ENCODE measurements at regions of chrX and their contacts with region 1.

Region 1: DNA sequence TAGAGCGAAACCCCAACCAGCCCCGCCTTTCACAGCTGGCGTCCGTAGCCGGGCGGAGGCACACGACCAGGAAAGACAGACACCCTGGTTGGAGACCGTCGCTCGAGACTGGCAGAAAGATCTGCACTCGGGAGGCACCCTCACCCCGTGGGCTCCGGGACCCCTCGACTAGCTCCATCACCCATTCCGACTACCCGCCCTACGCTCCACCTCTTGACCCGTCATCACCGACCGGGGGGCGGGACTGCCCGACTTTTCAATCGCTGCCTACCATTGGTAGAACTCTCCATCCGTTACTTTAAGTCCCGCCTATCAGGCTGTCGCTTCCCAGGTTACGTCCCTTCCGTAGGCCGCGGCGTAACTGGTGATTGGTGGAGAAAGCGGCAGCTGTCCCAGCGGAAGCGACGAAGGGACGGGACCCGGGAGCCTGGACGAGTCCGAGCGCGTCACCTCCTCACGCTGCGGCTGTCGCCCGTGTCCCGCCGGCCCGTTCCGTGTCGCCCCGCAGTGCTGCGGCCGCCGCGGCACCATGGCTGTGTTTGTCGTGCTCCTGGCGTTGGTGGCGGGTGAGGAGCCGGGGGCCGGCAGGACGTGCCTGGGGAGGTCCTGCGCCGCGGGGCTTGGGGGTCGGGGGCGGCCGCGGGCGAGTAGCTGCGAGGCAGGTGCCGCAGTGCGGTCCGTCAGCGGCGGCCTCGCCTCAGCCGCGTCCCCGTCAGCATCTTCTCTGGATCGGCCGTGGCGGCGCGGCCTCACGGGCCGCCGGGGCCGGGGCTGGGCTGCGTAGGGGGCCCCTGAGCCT is at the start of gene ATP6AP2:
- DNase-seq: peak; percentile 75 to 95 (median 84)
- ATAC-seq: peak; percentile 94
- H3K4me3 ChIP-seq: peak within 1 kb of the TSS; percentile 83
- H3K4me3 Mint-ChIP-seq: peak within 1 kb of the TSS; percentile 94
- H3K27ac ChIP-seq: peak within 1 kb of the TSS; percentile 79 to 89
- H3K27ac Mint-ChIP-seq: peak within 1 kb of the TSS; percentile 89
- H3K4me1 ChIP-seq: peaks cover 17% of the 10 kb centered on the region
- H3K4me1 Mint-ChIP-seq: peaks cover 32% of the 10 kb centered on the region
- H3K27me3 ChIP-seq: no peaks in the 10 kb centered on the region
- H3K27me3 Mint-ChIP-seq: no peaks in the 10 kb centered on the region
- CTCF ChIP-seq: no peak
- total RNA-seq, gene ATP6AP2: 73.8 to 78.7 TPM

Region 2: GRCh38 chrX:40539214-40540142 is 41.3 kb before region 1 on chrX:
- CTCF ChIA-PET with region 1: no interaction called
- POLR2A ChIA-PET with region 1: interaction called, 6 read pairs
- intact Hi-C with region 1: loop called in 1 of 2 experiments (anchors 5 kb)
- DNase-seq: peak; percentile 58 to 82 (median 68)
- ATAC-seq: peak; percentile 95
- H3K4me3 ChIP-seq: no peak overlapping the region
- H3K4me3 Mint-ChIP-seq: peak overlapping the region; percentile 4
- H3K27ac ChIP-seq: no peak overlapping the region
- H3K27ac Mint-ChIP-seq: peak overlapping the region; percentile 69
- H3K4me1 ChIP-seq: peaks cover 15% of the 10 kb centered on the region
- H3K4me1 Mint-ChIP-seq: peaks cover 25% of the 10 kb centered on the region
- H3K27me3 ChIP-seq: no peaks in the 10 kb centered on the region
- H3K27me3 Mint-ChIP-seq: no peaks in the 10 kb centered on the region
- CTCF ChIP-seq: peak; percentile 49

Region 3: GRCh38 chrX:40552768-40553167 is 28.0 kb before region 1 on chrX:
- CTCF ChIA-PET with region 1: no interaction called
- POLR2A ChIA-PET with region 1: no interaction called
- intact Hi-C with region 1: no loop called
- DNase-seq: no peak
- ATAC-seq: no peak
- H3K4me3 ChIP-seq: no peak overlapping the region
- H3K4me3 Mint-ChIP-seq: no peak overlapping the region
- H3K27ac ChIP-seq: no peak overlapping the region
- H3K27ac Mint-ChIP-seq: no peak overlapping the region
- H3K4me1 ChIP-seq: no peaks in the 10 kb centered on the region
- H3K4me1 Mint-ChIP-seq: no peaks in the 10 kb centered on the region
- H3K27me3 ChIP-seq: no peaks in the 10 kb centered on the region
- H3K27me3 Mint-ChIP-seq: no peaks in the 10 kb centered on the region
- CTCF ChIP-seq: no peak

Region 4: GRCh38 chrX:40570346-40571093 is 10.2 kb before region 1 on chrX:
- CTCF ChIA-PET with region 1: no interaction called
- POLR2A ChIA-PET with region 1: interaction called, 13 read pairs
- intact Hi-C with region 1: no loop called
- DNase-seq: peak in 4 of 14 experiments; percentile 18 to 51 (median 29)
- ATAC-seq: peak; percentile 65
- H3K4me3 ChIP-seq: peak overlapping the region; percentile 51
- H3K4me3 Mint-ChIP-seq: peak overlapping the region; percentile 85
- H3K27ac ChIP-seq: peak overlapping the region in 1 of 2 donors; percentile 40
- H3K27ac Mint-ChIP-seq: peak overlapping the region; percentile 82
- H3K4me1 ChIP-seq: peaks cover 12% of the 10 kb centered on the region
- H3K4me1 Mint-ChIP-seq: peaks cover 24% of the 10 kb centered on the region
- H3K27me3 ChIP-seq: no peaks in the 10 kb centered on the region
- H3K27me3 Mint-ChIP-seq: no peaks in the 10 kb centered on the region
- CTCF ChIP-seq: no peak

Region 5: DNA sequence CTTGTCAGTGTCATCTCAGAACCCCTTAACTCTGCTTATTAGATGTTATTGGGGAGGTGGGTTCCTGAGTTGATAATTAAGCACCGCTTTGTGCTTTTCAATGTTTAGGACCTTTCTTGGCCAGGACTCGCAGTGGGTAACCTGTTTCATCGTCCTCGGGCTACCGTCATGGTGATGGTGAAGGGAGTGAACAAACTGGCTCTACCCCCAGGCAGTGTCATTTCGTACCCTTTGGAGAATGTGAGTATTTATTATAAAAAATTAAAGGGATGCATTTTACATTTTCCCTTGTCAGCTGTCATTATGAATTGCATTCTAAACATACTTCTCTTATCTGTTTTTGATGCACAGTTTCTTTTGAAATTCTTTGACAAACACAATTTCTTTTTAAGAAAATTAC is 10.4 kb after region 1 on chrX:
- CTCF ChIA-PET with region 1: no interaction called
- POLR2A ChIA-PET with region 1: interaction called, 12 read pairs
- intact Hi-C with region 1: no loop called
- DNase-seq: no peak
- ATAC-seq: no peak
- H3K4me3 ChIP-seq: no peak overlapping the region
- H3K4me3 Mint-ChIP-seq: no peak overlapping the region
- H3K27ac ChIP-seq: no peak overlapping the region
- H3K27ac Mint-ChIP-seq: no peak overlapping the region
- H3K4me1 ChIP-seq: peaks cover 20% of the 10 kb centered on the region
- H3K4me1 Mint-ChIP-seq: peaks cover 43% of the 10 kb centered on the region
- H3K27me3 ChIP-seq: no peaks in the 10 kb centered on the region
- H3K27me3 Mint-ChIP-seq: no peaks in the 10 kb centered on the region
- CTCF ChIP-seq: no peak

Region 6: DNA sequence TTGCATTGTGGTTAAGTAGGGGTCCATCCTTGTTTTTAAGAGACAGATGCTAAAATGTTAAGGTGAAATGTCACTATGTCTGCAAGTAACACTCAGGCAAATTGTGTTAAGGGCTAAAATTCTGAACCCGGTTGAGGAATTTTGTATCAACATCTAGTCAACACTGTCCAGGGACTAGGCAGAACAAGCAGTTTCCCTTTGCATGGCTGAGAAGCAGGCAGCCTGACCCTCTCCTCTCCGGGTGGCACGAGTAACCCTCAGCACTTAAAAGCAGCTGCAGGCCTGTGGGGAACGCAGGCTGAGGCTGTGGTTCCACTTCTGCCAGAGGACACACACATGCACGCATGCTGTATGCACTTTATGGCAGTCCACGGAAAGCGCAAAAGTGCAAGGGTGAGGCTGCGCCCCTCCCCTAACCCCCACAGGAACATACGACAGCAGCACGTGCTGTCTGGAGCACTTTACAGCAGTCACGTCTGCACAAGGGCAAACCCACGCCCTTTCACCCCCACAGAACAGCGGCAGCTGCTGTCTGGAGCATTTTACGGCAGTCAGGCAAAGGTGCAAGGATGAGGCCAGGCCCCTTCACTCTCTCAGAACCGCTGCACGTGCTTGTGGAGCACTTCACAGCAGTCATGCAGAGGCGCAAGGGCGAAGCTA is 41.9 kb after region 1 on chrX:
- CTCF ChIA-PET with region 1: no interaction called
- POLR2A ChIA-PET with region 1: no interaction called
- intact Hi-C with region 1: no loop called
- DNase-seq: no peak
- ATAC-seq: no peak
- H3K4me3 ChIP-seq: no peak overlapping the region
- H3K4me3 Mint-ChIP-seq: no peak overlapping the region
- H3K27ac ChIP-seq: no peak overlapping the region
- H3K27ac Mint-ChIP-seq: no peak overlapping the region
- H3K4me1 ChIP-seq: no peaks in the 10 kb centered on the region
- H3K4me1 Mint-ChIP-seq: no peaks in the 10 kb centered on the region
- H3K27me3 ChIP-seq: no peaks in the 10 kb centered on the region
- H3K27me3 Mint-ChIP-seq: no peaks in the 10 kb centered on the region
- CTCF ChIP-seq: no peak

Region 7: GRCh38 chrX:40661489-40661888 is 80.8 kb after region 1 on chrX:
- CTCF ChIA-PET with region 1: no interaction called
- POLR2A ChIA-PET with region 1: no interaction called
- intact Hi-C with region 1: no loop called
- DNase-seq: no peak
- ATAC-seq: no peak
- H3K4me3 ChIP-seq: no peak overlapping the region
- H3K4me3 Mint-ChIP-seq: no peak overlapping the region
- H3K27ac ChIP-seq: no peak overlapping the region
- H3K27ac Mint-ChIP-seq: no peak overlapping the region
- H3K4me1 ChIP-seq: peaks cover 6% of the 10 kb centered on the region
- H3K4me1 Mint-ChIP-seq: no peaks in the 10 kb centered on the region
- H3K27me3 ChIP-seq: no peaks in the 10 kb centered on the region
- H3K27me3 Mint-ChIP-seq: no peaks in the 10 kb centered on the region
- CTCF ChIP-seq: no peak